Heart left ventricle (tissue), 16 donors: ENCODE measurements at regions of chr5 and their contacts with region 1.

Region 1: DNA sequence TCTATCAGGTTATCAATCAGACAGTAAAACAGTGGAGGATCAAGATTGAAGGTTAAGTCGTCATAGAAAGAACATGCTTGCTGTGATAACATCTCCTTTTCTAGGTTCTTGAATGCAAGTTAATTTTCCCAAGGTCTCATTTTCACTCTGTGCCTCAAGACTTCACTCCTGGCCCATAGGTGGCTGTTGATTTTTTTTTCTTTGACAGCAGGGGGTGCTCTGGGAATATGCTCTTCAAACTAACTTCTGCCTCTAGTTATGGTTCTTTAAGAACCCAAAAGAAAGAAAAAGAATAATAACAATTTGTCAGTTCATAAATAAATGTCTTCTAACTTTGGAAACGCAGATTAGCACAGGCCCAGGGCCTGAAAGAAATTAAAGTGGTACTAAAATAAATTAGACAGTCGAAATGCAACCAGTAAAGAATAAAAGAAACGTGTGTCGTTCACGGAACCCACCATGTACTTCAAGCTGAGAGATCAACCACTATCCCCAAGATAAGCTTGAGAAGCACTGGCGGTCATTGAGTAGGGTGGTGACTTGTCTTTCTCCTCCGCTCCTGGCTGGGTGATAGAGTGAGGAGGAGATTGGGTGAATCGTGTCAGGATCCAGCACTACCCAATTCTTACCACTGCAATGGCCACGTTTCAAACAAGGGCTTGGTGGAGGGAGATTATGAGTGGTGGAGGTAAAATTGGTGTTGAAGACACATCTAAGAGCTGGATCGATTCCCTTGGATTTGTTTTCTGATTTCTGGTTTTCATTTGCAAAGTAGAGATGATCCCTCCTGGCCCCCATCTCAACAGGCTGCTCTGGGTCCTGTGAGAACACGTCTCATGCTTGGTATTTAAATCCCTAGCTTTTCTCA is 93.4 kb upstream of the IRX4 start:
- DNase-seq: no peak
- ATAC-seq: no peak
- H3K4me3 ChIP-seq: no peak overlapping the region
- H3K27ac ChIP-seq: no peak overlapping the region
- H3K4me1 ChIP-seq: no peaks in the 10 kb centered on the region
- H3K27me3 ChIP-seq: no peaks in the 10 kb centered on the region
- CTCF ChIP-seq: peak in 9 of 12 donors; percentile 6 to 46 (median 29)
- POLR2A ChIP-seq: no peak

Region 2: GRCh38 chr5:2017540-2018389 is 41.6 kb after region 1 on chr5:
- intact Hi-C with region 1: no loop called
- DNase-seq: no peak
- ATAC-seq: no peak
- H3K4me3 ChIP-seq: no peak overlapping the region
- H3K27ac ChIP-seq: no peak overlapping the region
- H3K4me1 ChIP-seq: peaks cover 0 to 7% (median 0%) of the 10 kb centered on the region in 12 donors
- H3K27me3 ChIP-seq: peaks cover 0 to 4% (median 0%) of the 10 kb centered on the region in 9 donors
- CTCF ChIP-seq: peak in 8 of 12 donors; percentile 12 to 43 (median 26)
- POLR2A ChIP-seq: no peak

Region 3: GRCh38 chr5:2038321-2039179 is 62.4 kb after region 1 on chr5:
- intact Hi-C with region 1: loop called in 1 of 10 experiments (anchors 2 kb)
- DNase-seq: peak; percentile 59 to 86 (median 73)
- ATAC-seq: peak; percentile 87 to 99 (median 94)
- H3K4me3 ChIP-seq: peak overlapping the region; percentile 34 to 67 (median 56)
- H3K27ac ChIP-seq: no peak overlapping the region
- H3K4me1 ChIP-seq: peaks cover 0 to 14% (median 3%) of the 10 kb centered on the region in 12 donors
- H3K27me3 ChIP-seq: peaks cover 0 to 10% (median 0%) of the 10 kb centered on the region in 9 donors
- CTCF ChIP-seq: peak; percentile 63 to 84 (median 72)
- POLR2A ChIP-seq: no peak

Region 4: GRCh38 chr5:2156358-2157059 is 180.4 kb after region 1 on chr5:
- intact Hi-C with region 1: loop called in 1 of 10 experiments (anchors 5 kb)
- DNase-seq: no peak
- ATAC-seq: no peak
- H3K4me3 ChIP-seq: no peak overlapping the region
- H3K27ac ChIP-seq: no peak overlapping the region
- H3K4me1 ChIP-seq: no peaks in the 10 kb centered on the region
- H3K27me3 ChIP-seq: no peaks in the 10 kb centered on the region
- CTCF ChIP-seq: no peak
- POLR2A ChIP-seq: no peak